ENCODE measurements at regions of chr11 and their contacts with region 1.

Region 1: DNA sequence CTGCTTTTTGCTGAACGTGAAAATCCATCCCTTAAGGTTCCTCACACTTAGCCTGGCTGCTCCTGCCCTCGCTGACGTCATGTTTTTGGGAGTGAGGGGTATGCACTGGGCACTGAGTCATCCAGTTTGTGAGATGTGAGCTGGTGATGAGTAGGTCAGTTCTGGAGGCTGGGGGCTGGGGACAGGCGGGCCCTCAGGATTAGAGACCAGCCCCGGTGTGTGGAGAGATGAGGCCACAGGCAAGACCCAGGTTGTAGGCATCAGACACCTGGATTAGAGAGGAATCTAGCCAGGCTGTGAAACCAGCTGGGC is 9.2 kb downstream of the KCNC1 start:
- DNase-seq: no peak
- H3K4me3 ChIP-seq: no peak overlapping the region
- H3K4me3 Mint-ChIP-seq: no peak overlapping the region
- H3K27ac ChIP-seq: no peak overlapping the region
- H3K27ac Mint-ChIP-seq: no peak overlapping the region
- H3K4me1 ChIP-seq: no peaks in the 10 kb centered on the region
- H3K4me1 Mint-ChIP-seq: no peaks in the 10 kb centered on the region
- H3K27me3 ChIP-seq: no peaks in the 10 kb centered on the region
- H3K27me3 Mint-ChIP-seq: peaks cover 13 to 32% of the 10 kb centered on the region in 2 donors

Region 2: DNA sequence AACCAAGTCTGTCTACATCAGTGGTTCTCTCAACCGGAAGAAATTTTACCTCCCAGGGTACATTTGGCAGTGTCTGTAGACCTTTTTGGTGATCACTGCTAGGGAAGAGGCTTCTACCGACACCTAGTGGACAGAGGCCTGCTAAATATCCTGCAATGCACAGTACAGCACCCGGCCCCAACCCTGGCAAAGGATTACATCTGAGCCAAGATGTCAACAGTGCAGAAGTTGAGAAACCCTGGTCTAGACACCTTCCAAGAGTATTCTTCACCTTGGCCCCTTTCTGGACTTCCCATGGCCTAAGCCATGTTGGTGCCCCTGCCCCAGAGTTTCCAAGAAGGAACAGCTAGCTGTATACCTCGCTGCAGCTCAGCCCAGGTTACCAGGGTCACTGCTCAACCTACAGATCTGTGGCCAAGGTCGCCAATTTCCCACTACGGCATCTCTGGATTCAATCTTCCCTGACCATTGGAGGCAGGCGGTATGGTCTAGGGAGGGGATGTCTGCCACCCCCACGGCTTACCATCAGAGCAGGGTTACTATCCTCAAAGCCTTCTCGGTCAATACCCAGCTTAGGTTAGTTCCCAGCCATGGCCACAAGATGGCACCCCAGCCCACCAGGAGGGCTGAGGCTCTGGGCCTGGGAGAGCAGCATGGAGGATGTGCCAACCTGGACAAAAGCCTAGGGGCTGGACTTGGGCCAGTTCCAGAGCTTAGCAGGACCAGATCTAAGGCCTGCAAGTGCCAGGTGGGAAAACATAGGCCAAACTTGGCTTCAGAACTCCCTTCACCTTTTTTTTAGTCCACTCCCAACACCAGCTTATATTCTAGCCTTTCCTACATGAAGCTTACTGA is 12.9 kb before region 1 on chr11:
- CTCF ChIA-PET with region 1: interaction called, 25 read pairs
- POLR2A ChIA-PET with region 1: no interaction called
- intact Hi-C with region 1: no loop called
- DNase-seq: peak; percentile 23 to 42 (median 32)
- H3K4me3 ChIP-seq: no peak overlapping the region
- H3K4me3 Mint-ChIP-seq: no peak overlapping the region
- H3K27ac ChIP-seq: no peak overlapping the region
- H3K27ac Mint-ChIP-seq: no peak overlapping the region
- H3K4me1 ChIP-seq: no peaks in the 10 kb centered on the region
- H3K4me1 Mint-ChIP-seq: peaks cover 0 to 8% (median 5%) of the 10 kb centered on the region in 4 donors
- H3K27me3 ChIP-seq: peaks cover 13% of the 10 kb centered on the region
- H3K27me3 Mint-ChIP-seq: peaks cover 29 to 39% of the 10 kb centered on the region in 2 donors

Measured in CD4-positive, alpha-beta memory T cell (primary cell).